ENCODE measurements at regions of chr5 and their contacts with region 1.

Region 1: DNA sequence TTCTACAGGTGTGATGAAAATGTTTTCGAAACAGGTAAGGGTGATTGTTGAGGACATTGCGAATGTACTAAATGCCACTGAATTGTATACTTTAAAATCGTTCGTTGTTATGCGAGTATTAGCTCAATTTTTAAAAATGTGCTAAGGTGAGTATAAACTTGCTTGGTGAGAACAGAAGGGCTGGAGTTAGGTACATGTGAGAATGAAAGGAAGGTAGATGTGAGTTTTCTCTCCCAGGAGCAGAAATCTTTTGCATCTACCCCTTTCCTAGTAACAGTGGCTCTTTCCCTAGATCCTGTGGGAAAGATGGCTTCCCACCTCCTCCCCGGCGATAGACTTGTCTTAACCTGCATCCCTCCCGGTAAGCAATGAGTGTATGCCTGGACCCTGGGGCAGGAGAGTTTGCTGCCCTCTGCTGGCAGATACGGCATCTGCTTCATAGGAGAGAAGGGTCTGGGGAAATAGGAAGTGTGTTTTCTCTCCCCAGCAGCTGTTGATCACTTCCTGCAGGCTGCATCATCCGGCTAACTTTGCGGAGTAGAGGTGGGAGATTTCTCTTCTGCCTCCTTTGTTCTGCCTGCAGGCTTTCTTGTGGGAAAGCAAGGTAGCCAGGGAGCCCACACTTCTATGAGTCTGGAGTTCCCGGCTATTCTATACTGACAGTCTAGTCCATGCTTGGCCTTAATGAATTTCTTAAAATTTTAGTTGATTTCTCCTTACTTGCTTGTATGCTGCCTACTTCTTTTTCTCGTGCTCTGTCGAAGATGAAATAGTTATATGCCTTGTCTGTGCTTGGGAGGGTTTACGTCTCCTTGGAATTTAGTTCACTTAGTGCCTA is 373.3 kb upstream of the SEMA6A start:
- DNase-seq: peak; percentile 42 to 81
- ATAC-seq: peak; percentile 97

Region 2: GRCh38 chr5:116137544-116138378 is 810.1 kb before region 1 on chr5:
- intact Hi-C with region 1: loop called in 1 of 2 experiments (anchors 10 kb)
- DNase-seq: no peak
- ATAC-seq: peak; percentile 50

Region 3: GRCh38 chr5:117731446-117731845 is 783.5 kb after region 1 on chr5:
- intact Hi-C with region 1: no loop called
- DNase-seq: no peak
- ATAC-seq: no peak